Motor neuron (in vitro differentiated cells): ENCODE measurements at regions of chr2 and their contacts with region 1.

Region 1: GRCh38 chr2:71545572-71546274 is 92.4 kb downstream of the DYSF start:
- ATAC-seq: peak; percentile 11 to 93 (median 77)
- H3K4me3 ChIP-seq: no peak overlapping the region
- H3K27ac ChIP-seq: no peak overlapping the region
- H3K4me1 ChIP-seq: no peaks in the 10 kb centered on the region

Region 2: GRCh38 chr2:71646028-71646427 is 100.3 kb after region 1 on chr2:
- in situ Hi-C with region 1: no loop called
- ATAC-seq: no peak
- H3K4me3 ChIP-seq: no peak overlapping the region
- H3K27ac ChIP-seq: no peak overlapping the region
- H3K4me1 ChIP-seq: peaks cover 3 to 4% of the 10 kb centered on the region in 2 donors

Region 3: DNA sequence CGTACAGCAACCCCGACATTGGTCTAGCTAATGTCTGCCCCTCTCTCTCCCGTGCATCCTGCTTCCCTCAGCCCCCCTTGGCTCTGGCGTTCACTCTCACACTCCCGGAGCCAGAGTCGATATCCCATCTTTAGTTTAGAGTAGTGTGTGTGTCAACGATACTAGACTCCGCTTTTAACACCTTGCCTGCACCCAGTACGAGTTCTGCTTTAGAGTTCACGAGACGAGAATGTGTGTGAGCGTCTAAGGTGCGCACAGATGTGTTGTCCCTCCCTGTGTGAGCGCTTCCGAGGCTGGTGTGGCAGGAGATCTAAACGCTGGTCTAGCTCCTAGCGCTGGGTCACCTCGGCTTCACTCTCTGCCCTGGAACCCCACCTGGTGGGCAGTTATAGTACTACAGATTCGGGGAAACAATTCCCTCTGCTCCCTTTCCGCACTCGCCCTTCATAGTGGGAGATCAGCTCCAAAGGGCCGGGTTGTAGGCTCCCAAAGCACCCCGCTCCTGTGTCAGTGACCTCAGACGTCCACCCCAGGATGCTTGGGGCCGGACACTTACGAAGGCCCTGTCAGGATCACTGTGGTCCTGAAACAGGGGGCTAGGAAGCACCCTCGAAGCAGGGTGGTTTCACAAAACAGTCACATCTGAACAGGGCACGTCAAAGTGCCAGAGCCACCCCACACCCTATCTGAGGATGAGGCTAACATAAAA is 604.6 kb after region 1 on chr2:
- in situ Hi-C with region 1: loop called in 7 of 9 experiments (anchors 10 to 25 kb)
- ATAC-seq: peak; percentile 49 to 85 (median 80)
- H3K4me3 ChIP-seq: peak overlapping the region; percentile 3 to 36 (median 11)
- H3K27ac ChIP-seq: no peak overlapping the region
- H3K4me1 ChIP-seq: peaks cover 23 to 31% of the 10 kb centered on the region in 2 donors

Region 4: GRCh38 chr2:72745679-72746368 is 1200.1 kb after region 1 on chr2:
- in situ Hi-C with region 1: loop called in 2 of 9 experiments (anchors 25 kb)
- ATAC-seq: peak in 4 of 8 experiments; percentile 39 to 72 (median 57)
- H3K4me3 ChIP-seq: no peak overlapping the region
- H3K27ac ChIP-seq: no peak overlapping the region
- H3K4me1 ChIP-seq: no peaks in the 10 kb centered on the region

Region 5: GRCh38 chr2:72862239-72862988 is 1316.7 kb after region 1 on chr2:
- in situ Hi-C with region 1: loop called in 3 of 9 experiments (anchors 25 kb)
- ATAC-seq: peak; percentile 98 to 100 (median 99)
- H3K4me3 ChIP-seq: peak overlapping the region in 2 of 5 donors; percentile 16 to 23
- H3K27ac ChIP-seq: no peak overlapping the region
- H3K4me1 ChIP-seq: no peaks in the 10 kb centered on the region